ENCODE measurements at regions of chr20 and their contacts with region 1.

Region 1: GRCh38 chr20:49713753-49714712 is at the start of gene B4GALT5:
- DNase-seq: peak; percentile 83 to 93 (median 90)
- H3K4me3 ChIP-seq: peak within 1 kb of the TSS; percentile 64 to 93 (median 85)
- H3K27ac ChIP-seq: peak within 1 kb of the TSS; percentile 50 to 83
- H3K4me1 ChIP-seq: peaks cover 3 to 30% (median 19%) of the 10 kb centered on the region in 4 experiments
- H3K27me3 ChIP-seq: no peaks in the 10 kb centered on the region

Region 2: DNA sequence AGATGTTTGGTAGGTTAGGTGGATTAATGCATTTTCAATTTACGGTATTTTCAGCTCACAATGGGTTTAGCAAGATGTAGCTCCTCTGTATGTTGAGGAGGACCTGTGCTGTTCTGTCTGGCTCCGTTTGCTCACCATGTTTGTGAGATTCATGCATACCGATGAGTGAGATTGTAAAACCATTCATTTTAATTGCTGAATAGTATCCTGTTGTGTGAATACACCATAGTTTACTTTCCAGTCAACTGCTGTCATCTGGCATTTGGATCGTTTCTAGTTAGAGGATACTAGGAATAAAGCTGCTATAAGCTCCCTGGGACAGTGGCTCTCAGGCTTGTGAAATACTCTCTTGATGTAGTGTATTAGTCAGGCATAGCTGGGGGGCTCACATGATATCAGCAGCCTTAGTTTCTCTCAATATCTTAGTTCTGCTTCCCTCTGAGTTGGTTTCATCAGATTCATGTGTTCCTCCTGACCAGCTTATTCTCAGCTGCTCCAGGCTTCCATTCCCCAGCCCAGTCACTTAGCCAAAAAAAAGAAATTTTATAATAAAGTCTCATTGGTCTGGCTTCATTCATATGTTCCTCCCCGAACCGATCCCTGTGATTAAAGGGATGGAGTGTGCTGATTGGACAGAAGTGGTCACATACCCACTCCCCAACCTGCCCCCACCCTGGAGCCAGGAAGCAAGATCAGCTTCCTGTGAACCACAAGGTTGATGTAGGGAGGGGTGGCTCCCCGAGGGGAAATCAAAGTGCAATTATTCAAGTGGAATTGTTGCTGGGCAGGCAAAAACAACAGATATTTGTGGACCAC is 10.6 kb after region 1 on chr20:
- CTCF ChIA-PET with region 1: interaction called, 10 read pairs
- POLR2A ChIA-PET with region 1: no interaction called
- DNase-seq: peak; percentile 70 to 93 (median 91)
- H3K4me3 ChIP-seq: peak overlapping the region in 2 of 7 experiments; percentile 33 to 59
- H3K27ac ChIP-seq: peak overlapping the region in 1 of 2 experiments; percentile 25
- H3K4me1 ChIP-seq: peaks cover 7 to 17% (median 10%) of the 10 kb centered on the region in 4 experiments
- H3K27me3 ChIP-seq: no peaks in the 10 kb centered on the region

Measured in common myeloid progenitor, CD34-positive (primary cell).